Aorta (tissue), 5 donors: ENCODE measurements at regions of chr19 and their contacts with region 1.

Region 1: GRCh38 chr19:45523642-45524256 is 16.5 kb downstream of the VASP start:
- DNase-seq: peak; percentile 81 to 86
- ATAC-seq: peak; percentile 94
- H3K4me3 ChIP-seq: no peak overlapping the region
- H3K27ac ChIP-seq: no peak overlapping the region
- H3K4me1 ChIP-seq: no peaks in the 10 kb centered on the region
- H3K27me3 ChIP-seq: no peaks in the 10 kb centered on the region

Region 2: GRCh38 chr19:45560686-45561085 is 36.9 kb after region 1 on chr19:
- intact Hi-C with region 1: loop called in 1 of 2 experiments (anchors 1 kb)
- DNase-seq: no peak
- ATAC-seq: no peak
- H3K4me3 ChIP-seq: no peak overlapping the region
- H3K27ac ChIP-seq: no peak overlapping the region
- H3K4me1 ChIP-seq: no peaks in the 10 kb centered on the region
- H3K27me3 ChIP-seq: no peaks in the 10 kb centered on the region

Region 3: DNA sequence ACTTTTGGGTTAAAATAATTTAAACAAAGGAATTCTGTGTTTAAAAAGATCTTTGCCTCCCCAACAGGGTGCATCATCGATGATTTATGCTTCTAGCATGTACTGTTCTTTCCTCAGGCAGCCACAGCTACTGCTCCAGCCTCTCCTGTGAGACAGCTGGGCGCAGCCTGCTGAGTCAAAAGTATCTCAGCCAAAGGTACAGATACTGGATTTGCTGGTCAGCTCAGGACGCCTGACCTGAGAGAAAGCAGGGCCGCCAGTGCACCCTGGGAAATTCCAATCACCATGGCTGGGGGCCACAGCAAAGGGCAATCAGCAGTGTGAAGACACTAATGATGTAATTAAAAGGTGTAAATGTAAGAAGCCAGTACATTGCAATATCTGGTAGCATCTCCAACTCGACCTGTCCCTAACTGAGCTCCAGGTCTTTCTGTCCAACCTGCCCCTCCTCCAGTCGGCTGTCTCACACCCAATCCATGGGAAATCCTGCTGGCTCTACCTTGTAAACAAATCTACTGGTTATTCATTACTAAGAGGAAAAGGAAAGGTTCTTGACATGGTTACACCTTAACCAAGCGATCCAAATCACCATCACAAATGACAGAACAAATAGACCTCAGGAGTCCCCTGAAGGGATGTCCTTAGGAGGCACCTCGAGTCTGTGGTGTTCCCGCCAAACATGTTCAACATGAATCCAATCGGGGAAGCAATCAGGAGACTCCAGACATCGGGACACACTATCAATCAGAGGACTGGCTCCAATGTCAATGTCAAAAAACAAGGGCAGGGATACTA is 53.6 kb after region 1 on chr19:
- intact Hi-C with region 1: loop called in 1 of 2 experiments (anchors 5 kb)
- DNase-seq: no peak
- ATAC-seq: no peak
- H3K4me3 ChIP-seq: no peak overlapping the region
- H3K27ac ChIP-seq: no peak overlapping the region
- H3K4me1 ChIP-seq: no peaks in the 10 kb centered on the region
- H3K27me3 ChIP-seq: no peaks in the 10 kb centered on the region